ENCODE measurements at regions of chr12 and their contacts with region 1.

Region 1: DNA sequence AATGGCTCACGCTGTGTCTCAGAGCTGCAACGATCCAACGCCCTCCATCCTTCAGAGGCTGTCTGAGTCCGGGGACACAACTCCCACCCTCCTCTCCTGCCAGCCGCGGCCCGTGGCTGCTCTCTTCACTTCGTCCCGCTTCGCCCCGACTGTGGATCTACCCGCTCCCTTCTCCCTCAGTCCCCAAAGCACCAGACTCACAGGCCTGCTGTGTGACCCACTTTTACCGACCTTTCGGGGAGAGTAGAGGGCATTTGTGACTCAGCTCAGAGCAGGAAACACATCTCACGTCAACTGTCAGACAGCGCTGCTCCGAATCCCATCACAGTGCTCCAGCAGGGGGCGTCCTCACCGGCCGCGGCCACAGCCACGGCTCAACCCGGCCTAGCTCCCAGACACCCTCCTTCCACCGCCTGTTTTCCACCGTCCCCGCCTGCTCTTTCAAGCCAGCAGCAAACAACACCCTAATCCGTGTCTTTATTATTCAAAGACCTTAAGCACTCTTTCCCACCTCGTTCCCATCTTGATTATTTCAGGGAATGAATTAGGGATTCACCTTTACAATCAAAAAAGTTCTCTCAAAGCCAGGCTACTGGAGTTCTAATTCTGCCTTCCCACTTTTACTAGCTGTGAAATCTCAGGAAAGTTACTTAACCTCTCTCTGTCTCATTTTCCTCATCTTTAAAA is 5.0 kb upstream of the AQP2 start:
- DNase-seq: peak; percentile 61
- ATAC-seq: peak; percentile 99
- H3K4me3 ChIP-seq: peak overlapping the region; percentile 34 to 53
- H3K27ac ChIP-seq: peak overlapping the region; percentile 88
- H3K4me1 ChIP-seq: peaks cover 13% of the 10 kb centered on the region
- H3K27me3 ChIP-seq: no peaks in the 10 kb centered on the region
- CTCF ChIP-seq: peak; percentile 99

Region 2: GRCh38 chr12:49847161-49847560 is 98.4 kb before region 1 on chr12:
- CTCF ChIA-PET with region 1: no interaction called
- POLR2A ChIA-PET with region 1: no interaction called
- in situ Hi-C with region 1: no loop called
- intact Hi-C with region 1: no loop called
- DNase-seq: no peak
- ATAC-seq: no peak
- H3K4me3 ChIP-seq: no peak overlapping the region
- H3K27ac ChIP-seq: no peak overlapping the region
- H3K4me1 ChIP-seq: peaks cover 9% of the 10 kb centered on the region
- H3K27me3 ChIP-seq: peaks cover 13% of the 10 kb centered on the region
- CTCF ChIP-seq: no peak

Region 3: GRCh38 chr12:51866762-51867161 is 1921.2 kb after region 1 on chr12:
- CTCF ChIA-PET with region 1: interaction called, 12 read pairs
- POLR2A ChIA-PET with region 1: no interaction called
- in situ Hi-C with region 1: no loop called
- intact Hi-C with region 1: no loop called
- DNase-seq: no peak
- ATAC-seq: no peak
- H3K4me3 ChIP-seq: no peak overlapping the region
- H3K27ac ChIP-seq: no peak overlapping the region
- H3K4me1 ChIP-seq: no peaks in the 10 kb centered on the region
- H3K27me3 ChIP-seq: no peaks in the 10 kb centered on the region
- CTCF ChIP-seq: no peak

Measured in Panc1 (cell line).